Heart left ventricle (tissue), 16 donors: ENCODE measurements at regions of chr2 and their contacts with region 1.

Region 1: DNA sequence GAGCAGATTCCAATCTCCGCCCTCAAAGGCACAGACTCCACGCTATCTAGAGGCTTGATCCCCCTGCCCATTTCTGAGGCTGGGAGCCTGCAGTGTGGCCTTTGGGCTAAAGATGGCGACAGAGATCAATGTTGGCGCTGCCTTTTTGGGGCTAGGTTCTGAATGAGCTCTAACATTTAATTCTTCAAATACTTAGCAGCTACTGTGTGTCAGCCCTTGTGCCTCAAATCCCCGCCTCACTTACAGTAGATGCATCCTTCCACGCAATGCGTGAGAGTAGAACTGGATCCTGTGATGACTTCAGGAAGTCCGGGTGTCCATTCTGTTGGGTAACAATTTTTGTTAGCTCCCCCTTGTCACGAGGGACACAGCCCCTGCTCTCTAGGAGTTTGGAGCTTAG is 12.4 kb downstream of the IL1F10 start:
- DNase-seq: no peak
- ATAC-seq: peak in 3 of 4 donors; percentile 26 to 65 (median 63)
- H3K4me3 ChIP-seq: no peak overlapping the region
- H3K27ac ChIP-seq: no peak overlapping the region
- H3K4me1 ChIP-seq: peaks cover 0 to 3% (median 0%) of the 10 kb centered on the region in 12 donors
- H3K27me3 ChIP-seq: peaks cover 0 to 5% (median 0%) of the 10 kb centered on the region in 9 donors
- CTCF ChIP-seq: peak in 11 of 12 donors; percentile 30 to 57 (median 47)
- POLR2A ChIP-seq: no peak

Region 2: DNA sequence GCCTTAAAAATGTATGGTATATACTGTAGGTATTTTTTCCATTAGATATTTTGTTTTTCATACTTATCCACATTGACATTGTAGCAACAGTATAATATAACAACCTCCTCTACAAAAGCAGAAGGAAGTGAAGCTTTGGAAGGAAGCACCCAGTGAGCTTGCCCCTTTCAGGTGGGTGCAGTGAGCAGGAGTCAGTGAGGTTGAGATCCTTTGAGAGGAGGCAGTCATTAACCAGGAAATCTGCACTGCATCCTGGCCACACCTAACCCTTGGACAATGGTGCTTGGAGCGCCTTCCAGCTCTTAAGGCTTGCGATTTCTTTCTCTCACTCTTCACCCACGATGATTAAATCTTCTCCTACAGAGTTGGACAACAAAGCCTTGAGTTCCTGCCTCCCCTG is 155.3 kb before region 1 on chr2:
- intact Hi-C with region 1: no loop called
- DNase-seq: no peak
- ATAC-seq: no peak
- H3K4me3 ChIP-seq: no peak overlapping the region
- H3K27ac ChIP-seq: no peak overlapping the region
- H3K4me1 ChIP-seq: no peaks in the 10 kb centered on the region
- H3K27me3 ChIP-seq: peaks cover 0 to 25% (median 0%) of the 10 kb centered on the region in 9 donors
- CTCF ChIP-seq: no peak
- POLR2A ChIP-seq: no peak

Region 3: GRCh38 chr2:113138428-113139322 is 58.5 kb after region 1 on chr2:
- intact Hi-C with region 1: no loop called
- DNase-seq: peak in 1 of 5 donors; percentile 25
- ATAC-seq: peak in 2 of 4 donors; percentile 34 to 54
- H3K4me3 ChIP-seq: no peak overlapping the region
- H3K27ac ChIP-seq: no peak overlapping the region
- H3K4me1 ChIP-seq: peaks cover 0 to 7% (median 0%) of the 10 kb centered on the region in 12 donors
- H3K27me3 ChIP-seq: no peaks in the 10 kb centered on the region
- CTCF ChIP-seq: peak; percentile 59 to 85 (median 78)
- POLR2A ChIP-seq: no peak

Region 4: GRCh38 chr2:113192438-113193100 is 112.4 kb after region 1 on chr2:
- intact Hi-C with region 1: loop called in 3 of 10 experiments (anchors 5 kb)
- DNase-seq: peak in 1 of 5 donors; percentile 25
- ATAC-seq: no peak
- H3K4me3 ChIP-seq: no peak overlapping the region
- H3K27ac ChIP-seq: no peak overlapping the region
- H3K4me1 ChIP-seq: peaks cover 0 to 25% (median 0%) of the 10 kb centered on the region in 12 donors
- H3K27me3 ChIP-seq: no peaks in the 10 kb centered on the region
- CTCF ChIP-seq: no peak
- POLR2A ChIP-seq: no peak

Region 5: GRCh38 chr2:113198790-113199612 is 118.9 kb after region 1 on chr2:
- intact Hi-C with region 1: loop called in 6 of 10 experiments (anchors 1 to 5 kb)
- DNase-seq: peak; percentile 78 to 89 (median 82)
- ATAC-seq: peak; percentile 53 to 93 (median 88)
- H3K4me3 ChIP-seq: peak overlapping the region; percentile 60 to 97 (median 76)
- H3K27ac ChIP-seq: peak overlapping the region in 8 of 12 donors; percentile 9 to 58 (median 34)
- H3K4me1 ChIP-seq: peaks cover 0 to 13% (median 5%) of the 10 kb centered on the region in 12 donors
- H3K27me3 ChIP-seq: no peaks in the 10 kb centered on the region
- CTCF ChIP-seq: peak; percentile 88 to 100 (median 94)
- POLR2A ChIP-seq: no peak